Activated B cell treated with CpG ODN at 0.5 μM for 24 hours (primary cell): ENCODE measurements at regions of chr1 and their contacts with region 1.

Region 1: GRCh38 chr1:26864610-26865527 is 1.9 kb downstream of the SFN start:
- DNase-seq: peak; percentile 93
- ATAC-seq: peak; percentile 94
- H3K4me3 Mint-ChIP-seq: peak overlapping the region; percentile 92
- H3K27ac Mint-ChIP-seq: peak overlapping the region; percentile 98
- H3K4me1 Mint-ChIP-seq: peaks cover 23% of the 10 kb centered on the region
- H3K27me3 Mint-ChIP-seq: no peaks in the 10 kb centered on the region
- CTCF ChIP-seq: no peak

Region 2: GRCh38 chr1:26500488-26501175 is 364.2 kb before region 1 on chr1:
- CTCF ChIA-PET with region 1: no interaction called
- POLR2A ChIA-PET with region 1: interaction called, 24 read pairs
- intact Hi-C with region 1: loop called (anchors 5 kb)
- DNase-seq: peak; percentile 94
- ATAC-seq: peak; percentile 77
- H3K4me3 Mint-ChIP-seq: peak overlapping the region; percentile 90
- H3K27ac Mint-ChIP-seq: peak overlapping the region; percentile 93
- H3K4me1 Mint-ChIP-seq: peaks cover 8% of the 10 kb centered on the region
- H3K27me3 Mint-ChIP-seq: no peaks in the 10 kb centered on the region
- CTCF ChIP-seq: no peak

Region 3: GRCh38 chr1:26695356-26696118 is 169.3 kb before region 1 on chr1 and contains the start of gene ARID1A:
- CTCF ChIA-PET with region 1: no interaction called
- POLR2A ChIA-PET with region 1: interaction called, 13 read pairs
- intact Hi-C with region 1: loop called (anchors 1 kb)
- DNase-seq: peak; percentile 96
- ATAC-seq: peak; percentile 62
- H3K4me3 Mint-ChIP-seq: peak within 1 kb of the TSS; percentile 92
- H3K27ac Mint-ChIP-seq: peak within 1 kb of the TSS; percentile 93
- H3K4me1 Mint-ChIP-seq: peaks cover 34% of the 10 kb centered on the region
- H3K27me3 Mint-ChIP-seq: no peaks in the 10 kb centered on the region
- CTCF ChIP-seq: no peak
- total RNA-seq, gene ARID1A: 116 and 142 TPM in 2 replicates

Region 4: GRCh38 chr1:26799479-26800142 is 65.3 kb before region 1 on chr1:
- CTCF ChIA-PET with region 1: no interaction called
- POLR2A ChIA-PET with region 1: no interaction called
- intact Hi-C with region 1: no loop called
- DNase-seq: no peak
- ATAC-seq: no peak
- H3K4me3 Mint-ChIP-seq: no peak overlapping the region
- H3K27ac Mint-ChIP-seq: peak overlapping the region; percentile 50
- H3K4me1 Mint-ChIP-seq: peaks cover 8% of the 10 kb centered on the region
- H3K27me3 Mint-ChIP-seq: no peaks in the 10 kb centered on the region
- CTCF ChIP-seq: no peak

Region 5: GRCh38 chr1:26820784-26821269 is 44.0 kb before region 1 on chr1:
- CTCF ChIA-PET with region 1: interaction called, 14 read pairs
- POLR2A ChIA-PET with region 1: interaction called, 18 read pairs
- intact Hi-C with region 1: no loop called
- DNase-seq: no peak
- ATAC-seq: peak; percentile 100
- H3K4me3 Mint-ChIP-seq: peak overlapping the region; percentile 55
- H3K27ac Mint-ChIP-seq: peak overlapping the region; percentile 81
- H3K4me1 Mint-ChIP-seq: peaks cover 28% of the 10 kb centered on the region
- H3K27me3 Mint-ChIP-seq: peaks cover 3% of the 10 kb centered on the region
- CTCF ChIP-seq: no peak

Region 6: GRCh38 chr1:26853156-26853555 is 11.7 kb before region 1 on chr1:
- CTCF ChIA-PET with region 1: interaction called, 3 read pairs
- POLR2A ChIA-PET with region 1: interaction called, 9 read pairs
- intact Hi-C with region 1: loop called (anchors 1 kb)
- DNase-seq: peak; percentile 67
- ATAC-seq: peak; percentile 94
- H3K4me3 Mint-ChIP-seq: no peak overlapping the region
- H3K27ac Mint-ChIP-seq: no peak overlapping the region
- H3K4me1 Mint-ChIP-seq: no peaks in the 10 kb centered on the region
- H3K27me3 Mint-ChIP-seq: no peaks in the 10 kb centered on the region
- CTCF ChIP-seq: no peak

Region 7: DNA sequence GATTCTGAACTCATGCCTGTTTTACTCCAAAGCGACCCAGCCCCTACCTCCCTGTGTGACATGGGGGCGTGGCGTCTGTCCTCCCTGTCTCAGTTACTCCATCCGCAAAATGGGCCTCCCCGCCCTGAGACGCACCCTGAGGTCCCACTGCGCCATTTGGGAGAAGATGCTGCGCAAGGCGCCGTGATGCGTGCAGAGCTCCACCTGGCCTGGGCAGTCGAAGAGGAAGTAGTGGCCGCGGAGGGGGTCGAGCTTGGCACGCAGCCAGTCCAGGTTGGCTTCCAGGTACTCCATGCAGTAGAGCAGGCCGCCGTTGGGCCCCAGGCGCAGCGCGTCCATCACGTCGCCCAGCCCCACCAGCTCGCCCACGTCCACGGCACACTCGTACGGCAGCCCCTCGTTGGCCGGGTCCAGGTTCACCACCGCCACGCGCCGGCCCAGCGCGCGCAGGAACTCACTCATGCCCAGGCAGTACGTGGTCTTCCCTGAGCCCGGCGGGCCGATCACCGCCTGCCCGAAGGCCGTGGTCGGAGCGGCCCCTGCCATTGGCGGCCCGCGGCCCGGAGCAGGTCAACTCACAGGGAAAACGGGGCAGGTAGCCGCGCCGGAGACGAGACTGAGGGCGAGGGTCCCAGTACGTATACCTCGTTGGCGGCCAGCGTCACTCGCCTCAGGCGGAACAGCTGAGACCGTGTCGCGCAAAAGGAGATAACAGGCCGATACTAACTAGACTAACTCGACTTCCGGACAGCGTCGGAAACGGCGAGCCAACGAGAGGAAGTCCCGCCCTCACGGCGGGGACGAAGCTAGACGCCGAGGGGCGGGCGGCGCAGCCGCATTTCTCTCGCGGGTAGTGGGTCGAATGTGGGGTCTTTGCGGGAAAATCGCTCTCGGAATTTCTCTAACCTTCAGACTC is 24.9 kb after region 1 on chr1 and contains the start of gene GPN2:
- CTCF ChIA-PET with region 1: no interaction called
- POLR2A ChIA-PET with region 1: interaction called, 64 read pairs
- intact Hi-C with region 1: loop called (anchors 1 kb)
- DNase-seq: peak; percentile 74
- ATAC-seq: peak; percentile 95
- H3K4me3 Mint-ChIP-seq: peak within 1 kb of the TSS; percentile 93
- H3K27ac Mint-ChIP-seq: peak within 1 kb of the TSS; percentile 89
- H3K4me1 Mint-ChIP-seq: peaks cover 32% of the 10 kb centered on the region
- H3K27me3 Mint-ChIP-seq: no peaks in the 10 kb centered on the region
- CTCF ChIP-seq: no peak
- total RNA-seq, gene GPN2: 42.6 and 48.6 TPM in 2 replicates

Region 8: DNA sequence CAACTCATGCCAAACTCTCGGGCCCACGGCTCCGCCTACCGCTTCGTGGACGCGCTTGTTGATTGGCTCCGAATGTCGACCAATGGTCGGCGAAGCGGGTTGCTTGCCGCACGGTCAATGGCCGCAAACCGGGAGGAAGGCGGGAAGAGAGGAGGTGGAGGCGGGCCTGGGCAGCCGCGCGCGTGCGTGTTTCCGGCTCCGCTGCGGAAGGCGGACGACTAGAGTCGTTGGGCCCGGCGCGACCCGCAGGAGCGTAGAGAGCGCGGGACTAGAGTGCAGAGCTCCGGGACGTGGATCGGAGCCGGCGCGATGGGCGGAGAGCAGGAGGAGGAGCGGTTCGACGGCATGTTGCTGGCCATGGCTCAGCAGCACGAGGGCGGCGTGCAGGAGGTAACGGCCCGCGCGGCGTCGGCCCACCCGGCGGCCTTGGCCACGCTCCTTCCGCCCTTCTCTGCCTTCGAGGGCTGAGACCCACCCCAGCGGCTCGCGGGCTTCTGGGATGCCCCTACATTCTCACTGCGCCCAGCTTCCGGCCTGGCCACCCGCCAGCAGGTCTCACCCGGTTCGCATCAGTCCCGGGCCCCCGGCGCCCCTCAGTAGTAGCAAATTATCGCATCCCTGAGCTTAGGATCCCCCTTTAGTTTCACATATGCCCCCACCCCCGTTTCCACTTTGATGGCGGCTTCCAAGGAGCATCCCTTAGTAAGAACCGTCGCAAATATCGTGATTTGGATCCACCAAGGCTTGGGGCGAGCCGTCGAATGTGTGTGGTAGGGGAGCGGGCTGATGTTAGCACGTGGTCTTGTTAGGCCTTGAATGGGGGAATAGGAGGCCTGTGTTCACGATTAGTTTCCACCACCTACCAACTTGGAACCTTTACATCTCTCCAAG is 56.9 kb after region 1 on chr1 and contains the start of gene NUDC:
- CTCF ChIA-PET with region 1: no interaction called
- POLR2A ChIA-PET with region 1: interaction called, 3 read pairs
- intact Hi-C with region 1: loop called (anchors 1 kb)
- DNase-seq: peak; percentile 88
- ATAC-seq: peak; percentile 95
- H3K4me3 Mint-ChIP-seq: peak within 1 kb of the TSS; percentile 96
- H3K27ac Mint-ChIP-seq: peak within 1 kb of the TSS; percentile 95
- H3K4me1 Mint-ChIP-seq: peaks cover 31% of the 10 kb centered on the region
- H3K27me3 Mint-ChIP-seq: no peaks in the 10 kb centered on the region
- CTCF ChIP-seq: no peak
- total RNA-seq, gene NUDC: 71.7 and 73.7 TPM in 2 replicates

Region 9: GRCh38 chr1:27037515-27037914 is 172.6 kb after region 1 on chr1:
- CTCF ChIA-PET with region 1: no interaction called
- POLR2A ChIA-PET with region 1: no interaction called
- intact Hi-C with region 1: no loop called
- DNase-seq: no peak
- ATAC-seq: no peak
- H3K4me3 Mint-ChIP-seq: no peak overlapping the region
- H3K27ac Mint-ChIP-seq: no peak overlapping the region
- H3K4me1 Mint-ChIP-seq: no peaks in the 10 kb centered on the region
- H3K27me3 Mint-ChIP-seq: peaks cover 4% of the 10 kb centered on the region
- CTCF ChIP-seq: no peak